ENCODE measurements at regions of chr3 and their contacts with region 1.

Region 1: GRCh38 chr3:36957862-36958686 is 13.2 kb upstream of the TRANK1 start:
- DNase-seq: peak; percentile 19
- H3K4me3 ChIP-seq: no peak overlapping the region
- H3K27ac ChIP-seq: no peak overlapping the region
- H3K4me1 ChIP-seq: no peaks in the 10 kb centered on the region
- H3K27me3 ChIP-seq: peaks cover 2% of the 10 kb centered on the region in 2 experiments
- CTCF ChIP-seq: no peak
- POLR2A ChIP-seq: no peak

Region 2: GRCh38 chr3:35965908-35966307 is 992.2 kb before region 1 on chr3:
- CTCF ChIA-PET with region 1: interaction called, 17 read pairs
- POLR2A ChIA-PET with region 1: no interaction called
- dilution Hi-C with region 1: no loop called
- intact Hi-C with region 1: loop called (anchors 2 kb)
- DNase-seq: peak; percentile 38
- H3K4me3 ChIP-seq: no peak overlapping the region
- H3K27ac ChIP-seq: no peak overlapping the region
- H3K4me1 ChIP-seq: no peaks in the 10 kb centered on the region
- H3K27me3 ChIP-seq: peaks cover 2 to 7% of the 10 kb centered on the region in 2 experiments
- CTCF ChIP-seq: peak; percentile 17 to 23
- POLR2A ChIP-seq: no peak

Region 3: DNA sequence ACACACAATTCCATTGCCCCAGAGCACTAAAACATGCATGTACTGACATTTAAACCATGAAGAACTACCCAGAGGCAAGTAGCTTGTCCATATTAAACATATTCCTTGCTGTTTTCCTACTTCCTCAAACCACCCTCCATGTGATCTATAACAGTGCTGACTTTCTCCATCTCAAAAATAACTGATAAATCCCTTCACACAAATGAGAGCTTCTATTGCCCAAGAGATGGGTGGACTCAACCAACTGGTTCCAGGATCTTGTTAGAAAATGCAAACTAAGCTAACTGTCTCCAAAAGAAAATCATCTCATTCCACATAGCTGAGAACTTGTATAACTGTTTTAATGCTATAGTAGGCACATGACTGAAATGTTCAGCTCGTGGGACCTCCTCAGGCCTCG is 223.3 kb before region 1 on chr3:
- CTCF ChIA-PET with region 1: interaction called, 30 read pairs
- POLR2A ChIA-PET with region 1: no interaction called
- dilution Hi-C with region 1: no loop called
- intact Hi-C with region 1: loop called (anchors 1 kb)
- DNase-seq: no peak
- H3K4me3 ChIP-seq: no peak overlapping the region
- H3K27ac ChIP-seq: no peak overlapping the region
- H3K4me1 ChIP-seq: no peaks in the 10 kb centered on the region
- H3K27me3 ChIP-seq: no peaks in the 10 kb centered on the region
- CTCF ChIP-seq: no peak
- POLR2A ChIP-seq: no peak

Region 4: DNA sequence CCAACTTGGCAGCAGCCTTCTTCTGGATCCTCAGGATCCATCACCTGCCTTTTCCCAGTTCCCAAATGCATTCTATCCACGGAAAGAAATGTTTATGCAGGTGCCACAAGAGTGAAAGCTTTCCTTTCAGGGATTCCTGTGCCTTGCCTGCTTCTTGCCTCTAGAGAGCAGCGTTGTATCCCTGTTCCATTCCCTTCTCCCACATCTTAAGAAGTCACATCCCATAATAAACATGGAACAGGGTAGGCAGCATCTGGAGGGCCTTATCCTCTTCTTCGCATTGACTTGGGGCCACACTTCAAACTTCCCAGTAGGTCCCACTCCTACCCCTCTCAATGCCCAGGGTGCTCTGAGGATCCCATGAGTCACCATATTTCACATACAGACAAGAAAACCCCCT is 121.0 kb before region 1 on chr3:
- CTCF ChIA-PET with region 1: interaction called, 18 read pairs
- POLR2A ChIA-PET with region 1: no interaction called
- dilution Hi-C with region 1: no loop called
- intact Hi-C with region 1: no loop called
- DNase-seq: peak; percentile 11
- H3K4me3 ChIP-seq: no peak overlapping the region
- H3K27ac ChIP-seq: no peak overlapping the region
- H3K4me1 ChIP-seq: no peaks in the 10 kb centered on the region
- H3K27me3 ChIP-seq: no peaks in the 10 kb centered on the region
- CTCF ChIP-seq: peak in 1 of 2 donors; percentile 34
- POLR2A ChIP-seq: no peak

Region 5: GRCh38 chr3:36868614-36869436 is 89.2 kb before region 1 on chr3:
- CTCF ChIA-PET with region 1: interaction called, 33 read pairs
- POLR2A ChIA-PET with region 1: no interaction called
- dilution Hi-C with region 1: no loop called
- intact Hi-C with region 1: loop called (anchors 1 kb)
- DNase-seq: peak; percentile 67
- H3K4me3 ChIP-seq: no peak overlapping the region
- H3K27ac ChIP-seq: no peak overlapping the region
- H3K4me1 ChIP-seq: no peaks in the 10 kb centered on the region
- H3K27me3 ChIP-seq: no peaks in the 10 kb centered on the region
- CTCF ChIP-seq: peak; percentile 71 to 75
- POLR2A ChIP-seq: no peak

Region 6: DNA sequence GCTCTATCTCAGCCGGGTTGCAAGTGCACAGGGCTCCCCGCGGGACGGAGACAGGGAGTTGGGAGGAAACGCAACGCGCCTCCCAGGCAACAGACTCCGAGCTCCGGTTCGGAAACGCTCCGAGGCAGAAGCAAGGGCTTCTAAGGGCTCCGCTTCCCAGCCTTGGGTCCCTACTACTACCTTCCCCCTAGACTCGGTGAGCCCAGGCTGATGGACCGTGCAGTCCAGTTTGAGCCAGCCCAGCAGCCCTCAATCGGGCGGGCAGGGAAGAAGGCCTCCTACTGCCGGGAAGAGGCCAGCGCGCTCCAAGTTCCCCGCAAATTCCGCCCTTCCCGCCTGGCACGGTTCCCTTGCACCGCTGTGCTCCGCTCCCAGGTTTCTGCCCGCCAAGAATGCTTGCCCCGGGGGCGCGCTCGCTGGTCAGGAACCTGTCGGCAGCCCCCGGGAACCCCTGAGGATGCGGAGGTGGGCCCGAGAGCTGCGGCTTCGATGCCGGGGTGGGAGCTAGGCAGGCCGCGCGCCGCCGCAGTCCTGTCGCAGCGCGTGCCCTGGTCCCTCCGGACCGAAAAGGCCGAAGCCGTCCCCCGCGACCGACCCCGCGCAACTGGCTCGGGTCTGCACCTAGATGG is 13.9 kb before region 1 on chr3:
- CTCF ChIA-PET with region 1: interaction called, 25 read pairs
- POLR2A ChIA-PET with region 1: no interaction called
- dilution Hi-C with region 1: no loop called
- intact Hi-C with region 1: no loop called
- DNase-seq: peak; percentile 61
- H3K4me3 ChIP-seq: peak overlapping the region; percentile 56 to 85 (median 69)
- H3K27ac ChIP-seq: no peak overlapping the region
- H3K4me1 ChIP-seq: peaks cover 12% of the 10 kb centered on the region
- H3K27me3 ChIP-seq: no peaks in the 10 kb centered on the region
- CTCF ChIP-seq: no peak
- POLR2A ChIP-seq: no peak

Region 7: DNA sequence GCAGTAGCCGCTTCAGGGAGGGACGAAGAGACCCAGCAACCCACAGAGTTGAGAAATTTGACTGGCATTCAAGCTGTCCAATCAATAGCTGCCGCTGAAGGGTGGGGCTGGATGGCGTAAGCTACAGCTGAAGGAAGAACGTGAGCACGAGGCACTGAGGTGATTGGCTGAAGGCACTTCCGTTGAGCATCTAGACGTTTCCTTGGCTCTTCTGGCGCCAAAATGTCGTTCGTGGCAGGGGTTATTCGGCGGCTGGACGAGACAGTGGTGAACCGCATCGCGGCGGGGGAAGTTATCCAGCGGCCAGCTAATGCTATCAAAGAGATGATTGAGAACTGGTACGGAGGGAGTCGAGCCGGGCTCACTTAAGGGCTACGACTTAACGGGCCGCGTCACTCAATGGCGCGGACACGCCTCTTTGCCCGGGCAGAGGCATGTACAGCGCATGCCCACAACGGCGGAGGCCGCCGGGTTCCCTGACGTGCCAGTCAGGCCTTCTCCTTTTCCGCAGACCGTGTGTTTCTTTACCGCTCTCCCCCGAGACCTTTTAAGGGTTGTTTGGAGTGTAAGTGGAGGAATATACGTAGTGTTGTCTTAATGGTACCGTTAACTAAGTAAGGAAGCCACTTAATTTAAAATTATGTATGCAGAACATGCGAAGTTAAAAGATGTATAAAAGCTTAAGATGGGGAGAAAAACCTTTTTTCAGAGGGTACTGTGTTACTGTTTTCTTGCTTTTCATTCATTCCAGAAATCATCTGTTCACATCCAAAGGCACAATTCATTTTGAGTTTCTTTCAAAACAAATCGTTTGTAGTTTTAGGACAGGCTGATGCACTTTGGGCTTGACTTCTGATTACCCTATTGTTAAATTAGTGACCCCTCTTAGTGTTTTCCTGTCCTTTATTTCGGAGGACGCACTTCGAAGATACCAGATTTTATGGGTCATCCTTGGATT is 35.5 kb after region 1 on chr3 and contains the start of gene MLH1:
- CTCF ChIA-PET with region 1: interaction called, 15 read pairs
- POLR2A ChIA-PET with region 1: no interaction called
- dilution Hi-C with region 1: no loop called
- intact Hi-C with region 1: no loop called
- DNase-seq: peak; percentile 100
- H3K4me3 ChIP-seq: peak within 1 kb of the TSS; percentile 32 to 89 (median 76)
- H3K27ac ChIP-seq: peak within 1 kb of the TSS; percentile 97
- H3K4me1 ChIP-seq: peaks cover 43% of the 10 kb centered on the region
- H3K27me3 ChIP-seq: no peaks in the 10 kb centered on the region
- CTCF ChIP-seq: no peak
- POLR2A ChIP-seq: peak; percentile 91
- total RNA-seq, gene MLH1: 30.1 and 32.9 TPM in 2 replicates

Region 8: DNA sequence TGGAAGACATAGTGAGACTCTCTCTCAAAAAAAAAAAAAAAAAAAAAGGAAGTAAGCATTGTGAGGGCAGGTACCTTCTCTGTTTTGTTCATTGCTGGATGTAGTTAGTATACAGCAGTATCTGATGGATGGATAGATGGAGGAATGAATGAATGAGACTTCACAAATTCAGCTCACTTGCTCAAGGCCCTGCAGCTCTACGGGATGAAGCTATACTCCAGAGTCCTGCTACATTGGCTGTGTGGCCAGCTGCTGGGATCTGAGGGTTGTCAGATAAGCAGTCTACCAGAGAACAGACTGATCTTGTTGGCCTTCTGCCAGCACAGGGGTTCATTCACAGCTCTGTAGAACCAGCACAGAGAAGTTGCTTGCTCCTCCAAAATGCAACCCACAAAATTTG is 70.3 kb after region 1 on chr3:
- CTCF ChIA-PET with region 1: no interaction called
- POLR2A ChIA-PET with region 1: no interaction called
- dilution Hi-C with region 1: no loop called
- intact Hi-C with region 1: no loop called
- DNase-seq: peak; percentile 18
- H3K4me3 ChIP-seq: no peak overlapping the region
- H3K27ac ChIP-seq: no peak overlapping the region
- H3K4me1 ChIP-seq: no peaks in the 10 kb centered on the region
- H3K27me3 ChIP-seq: no peaks in the 10 kb centered on the region
- CTCF ChIP-seq: no peak
- POLR2A ChIP-seq: no peak

Region 9: DNA sequence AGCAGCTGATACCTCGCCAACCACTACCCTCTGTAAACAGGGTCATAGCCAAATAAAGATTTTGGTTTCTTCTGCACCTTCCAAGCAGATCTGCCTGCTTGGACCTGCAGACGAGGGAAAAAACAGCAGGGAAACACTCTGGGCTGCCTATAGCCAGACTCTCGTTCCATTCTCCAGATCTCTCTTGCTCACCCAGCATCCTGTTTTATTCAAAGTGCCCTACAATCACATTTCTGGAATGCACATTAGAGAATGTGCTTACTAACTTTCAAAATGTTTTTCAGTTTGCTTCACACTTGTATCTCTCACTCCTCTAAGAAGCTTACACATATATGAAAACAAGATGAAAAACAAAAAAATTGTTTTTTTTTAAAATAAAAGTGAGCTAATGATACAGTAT is 106.7 kb after region 1 on chr3:
- CTCF ChIA-PET with region 1: no interaction called
- POLR2A ChIA-PET with region 1: no interaction called
- dilution Hi-C with region 1: no loop called
- intact Hi-C with region 1: no loop called
- DNase-seq: no peak
- H3K4me3 ChIP-seq: no peak overlapping the region
- H3K27ac ChIP-seq: no peak overlapping the region
- H3K4me1 ChIP-seq: peaks cover 5% of the 10 kb centered on the region
- H3K27me3 ChIP-seq: no peaks in the 10 kb centered on the region
- CTCF ChIP-seq: no peak
- POLR2A ChIP-seq: no peak

Region 10: GRCh38 chr3:37086918-37087317 is 128.8 kb after region 1 on chr3:
- CTCF ChIA-PET with region 1: no interaction called
- POLR2A ChIA-PET with region 1: no interaction called
- dilution Hi-C with region 1: no loop called
- intact Hi-C with region 1: no loop called
- DNase-seq: no peak
- H3K4me3 ChIP-seq: no peak overlapping the region
- H3K27ac ChIP-seq: no peak overlapping the region
- H3K4me1 ChIP-seq: no peaks in the 10 kb centered on the region
- H3K27me3 ChIP-seq: no peaks in the 10 kb centered on the region
- CTCF ChIP-seq: no peak
- POLR2A ChIP-seq: no peak

Measured in endothelial cell of umbilical vein (primary cell).